ENCODE measurements at regions of chr12 and their contacts with region 1.

Region 1: GRCh38 chr12:76586764-76587395 is 27.3 kb upstream of the OSBPL8 start:
- DNase-seq: peak; percentile 66 to 82 (median 76)
- H3K4me3 ChIP-seq: no peak overlapping the region
- H3K27ac ChIP-seq: no peak overlapping the region
- H3K4me1 ChIP-seq: peaks cover 0 to 13% (median 0%) of the 10 kb centered on the region in 4 experiments
- H3K27me3 ChIP-seq: no peaks in the 10 kb centered on the region

Region 2: GRCh38 chr12:76455582-76456345 is 131.1 kb before region 1 on chr12:
- CTCF ChIA-PET with region 1: interaction called, 12 read pairs
- POLR2A ChIA-PET with region 1: no interaction called
- DNase-seq: peak; percentile 43 to 66 (median 63)
- H3K4me3 ChIP-seq: no peak overlapping the region
- H3K27ac ChIP-seq: no peak overlapping the region
- H3K4me1 ChIP-seq: no peaks in the 10 kb centered on the region
- H3K27me3 ChIP-seq: no peaks in the 10 kb centered on the region

Region 3: GRCh38 chr12:76569685-76570604 is 16.9 kb before region 1 on chr12:
- CTCF ChIA-PET with region 1: interaction called, 17 read pairs
- POLR2A ChIA-PET with region 1: no interaction called
- DNase-seq: peak in 2 of 3 donors; percentile 46 to 60
- H3K4me3 ChIP-seq: peak overlapping the region in 2 of 7 experiments; percentile 3 to 23
- H3K27ac ChIP-seq: no peak overlapping the region
- H3K4me1 ChIP-seq: peaks cover 0 to 8% (median 4%) of the 10 kb centered on the region in 4 experiments
- H3K27me3 ChIP-seq: no peaks in the 10 kb centered on the region